ENCODE measurements at regions of chr5 and their contacts with region 1.

Region 1: DNA sequence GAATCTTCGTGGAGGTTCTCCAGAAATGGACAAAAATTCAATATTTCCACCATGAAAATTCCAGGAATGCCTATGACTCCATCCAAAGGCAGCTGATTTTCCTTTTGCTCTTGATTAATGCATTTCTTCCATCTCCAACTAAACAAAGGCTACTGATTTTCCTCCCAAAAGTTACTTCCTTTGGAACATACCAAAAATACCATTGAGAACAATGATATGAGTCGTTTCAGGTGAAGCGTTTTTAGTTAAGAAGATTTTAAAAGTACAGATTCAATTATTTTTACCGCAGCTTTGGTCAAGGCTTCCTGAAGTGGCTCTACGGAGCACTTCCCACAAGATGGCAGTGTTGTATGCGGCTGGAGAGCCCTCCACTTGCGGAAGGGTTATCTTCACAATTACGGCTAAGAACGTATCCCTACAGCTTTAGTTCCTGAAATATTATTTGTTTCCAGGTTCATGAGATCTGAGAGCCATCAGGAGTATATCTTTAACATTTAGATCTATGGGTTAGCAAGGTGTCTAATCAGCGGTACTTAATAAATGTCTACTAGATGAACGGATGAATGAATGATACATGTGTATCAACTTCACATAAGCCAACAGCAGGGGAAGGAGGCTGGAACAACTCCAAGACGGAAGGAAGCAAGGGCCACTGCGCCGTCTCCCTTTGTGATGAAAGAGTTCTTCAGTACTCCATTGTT is 35.9 kb upstream of the ARSB start:
- DNase-seq: peak; percentile 73
- H3K4me3 ChIP-seq: no peak overlapping the region
- H3K27ac ChIP-seq: no peak overlapping the region
- H3K4me1 ChIP-seq: peaks cover 10% of the 10 kb centered on the region
- H3K27me3 ChIP-seq: peaks cover 24% of the 10 kb centered on the region
- CTCF ChIP-seq: peak; percentile 94

Region 2: GRCh38 chr5:78899922-78900362 is 121.1 kb before region 1 on chr5:
- CTCF ChIA-PET with region 1: interaction called, 4 read pairs
- POLR2A ChIA-PET with region 1: no interaction called
- intact Hi-C with region 1: loop called (anchors 2 kb)
- DNase-seq: peak; percentile 76
- H3K4me3 ChIP-seq: no peak overlapping the region
- H3K27ac ChIP-seq: no peak overlapping the region
- H3K4me1 ChIP-seq: no peaks in the 10 kb centered on the region
- H3K27me3 ChIP-seq: no peaks in the 10 kb centered on the region
- CTCF ChIP-seq: peak; percentile 94

Region 3: DNA sequence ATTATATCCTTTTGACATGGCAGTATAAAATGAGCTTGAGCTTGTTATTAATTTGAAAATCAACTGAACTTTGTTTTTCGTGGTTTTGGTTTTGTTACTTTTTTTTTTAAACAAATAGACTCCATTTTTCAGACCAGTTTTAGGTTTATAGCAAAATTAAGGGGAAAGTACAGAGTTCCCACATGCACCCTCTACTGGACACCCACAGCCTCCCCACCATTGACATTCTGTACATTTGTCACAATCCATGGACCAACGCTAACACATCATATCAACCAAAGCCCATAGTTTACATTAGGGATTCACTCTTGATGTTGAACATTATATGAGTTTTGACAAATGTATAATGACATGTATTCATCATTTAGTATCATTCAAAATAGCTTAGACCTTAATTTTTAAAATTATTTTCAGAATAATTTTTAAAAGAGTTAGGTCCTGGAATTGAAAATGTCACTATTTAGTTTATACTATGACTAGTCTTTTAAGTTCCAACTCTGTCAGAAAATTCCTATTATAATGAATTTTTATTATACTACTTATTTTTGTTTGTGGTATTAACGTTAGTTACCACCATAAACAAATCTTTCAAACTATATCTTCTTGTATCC is 179.7 kb after region 1 on chr5:
- CTCF ChIA-PET with region 1: no interaction called
- POLR2A ChIA-PET with region 1: no interaction called
- intact Hi-C with region 1: loop called (anchors 5 kb)
- DNase-seq: peak; percentile 35
- H3K4me3 ChIP-seq: no peak overlapping the region
- H3K27ac ChIP-seq: no peak overlapping the region
- H3K4me1 ChIP-seq: peaks cover 4% of the 10 kb centered on the region
- H3K27me3 ChIP-seq: no peaks in the 10 kb centered on the region
- CTCF ChIP-seq: peak; percentile 63

Region 4: GRCh38 chr5:79464695-79465332 is 443.8 kb after region 1 on chr5:
- CTCF ChIA-PET with region 1: no interaction called
- POLR2A ChIA-PET with region 1: no interaction called
- intact Hi-C with region 1: loop called (anchors 5 kb)
- DNase-seq: peak; percentile 53
- H3K4me3 ChIP-seq: no peak overlapping the region
- H3K27ac ChIP-seq: no peak overlapping the region
- H3K4me1 ChIP-seq: peaks cover 4% of the 10 kb centered on the region
- H3K27me3 ChIP-seq: no peaks in the 10 kb centered on the region
- CTCF ChIP-seq: peak; percentile 78

Region 5: GRCh38 chr5:79857714-79858409 is 836.9 kb after region 1 on chr5:
- CTCF ChIA-PET with region 1: interaction called, 3 read pairs
- POLR2A ChIA-PET with region 1: no interaction called
- intact Hi-C with region 1: loop called (anchors 5 kb)
- DNase-seq: peak; percentile 72
- H3K4me3 ChIP-seq: no peak overlapping the region
- H3K27ac ChIP-seq: no peak overlapping the region
- H3K4me1 ChIP-seq: no peaks in the 10 kb centered on the region
- H3K27me3 ChIP-seq: peaks cover 18% of the 10 kb centered on the region
- CTCF ChIP-seq: peak; percentile 97

Measured in A673 (cell line).